Right ventricle myocardium superior (tissue), 1 donor: ENCODE measurements at regions of chr3 and their contacts with region 1.

Region 1: DNA sequence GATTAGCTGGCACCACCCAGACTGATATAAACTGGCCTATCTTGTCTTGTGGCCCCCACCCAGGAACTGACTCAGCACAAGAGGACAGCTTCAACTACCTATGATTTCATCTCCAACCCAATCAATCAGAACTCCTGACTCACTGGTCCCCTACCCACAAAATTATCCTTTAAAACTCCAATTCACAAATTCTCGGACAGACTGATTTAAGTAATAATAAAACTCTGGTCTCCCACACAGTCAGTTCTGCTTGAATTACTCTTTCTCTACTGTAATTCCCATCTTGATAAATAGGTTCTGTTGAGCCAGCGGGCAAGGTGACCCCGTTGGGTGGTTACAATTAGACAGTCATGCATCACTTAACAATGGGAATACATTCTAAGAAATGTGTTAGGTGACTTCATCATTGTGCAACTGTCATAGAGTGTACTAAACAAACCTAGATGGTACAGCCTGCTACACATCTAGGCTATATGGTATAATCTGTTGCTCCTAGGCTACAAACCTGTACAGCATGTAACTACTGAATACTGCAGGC is 48.1 kb upstream of the MAP4 start:
- DNase-seq: no peak
- ATAC-seq: peak; percentile 15

Region 2: GRCh38 chr3:48047841-48048456 is 16.4 kb before region 1 on chr3:
- intact Hi-C with region 1: loop called (anchors 2 kb)
- DNase-seq: no peak
- ATAC-seq: peak; percentile 8